ENCODE measurements at regions of chr19 and their contacts with region 1.

Region 1: DNA sequence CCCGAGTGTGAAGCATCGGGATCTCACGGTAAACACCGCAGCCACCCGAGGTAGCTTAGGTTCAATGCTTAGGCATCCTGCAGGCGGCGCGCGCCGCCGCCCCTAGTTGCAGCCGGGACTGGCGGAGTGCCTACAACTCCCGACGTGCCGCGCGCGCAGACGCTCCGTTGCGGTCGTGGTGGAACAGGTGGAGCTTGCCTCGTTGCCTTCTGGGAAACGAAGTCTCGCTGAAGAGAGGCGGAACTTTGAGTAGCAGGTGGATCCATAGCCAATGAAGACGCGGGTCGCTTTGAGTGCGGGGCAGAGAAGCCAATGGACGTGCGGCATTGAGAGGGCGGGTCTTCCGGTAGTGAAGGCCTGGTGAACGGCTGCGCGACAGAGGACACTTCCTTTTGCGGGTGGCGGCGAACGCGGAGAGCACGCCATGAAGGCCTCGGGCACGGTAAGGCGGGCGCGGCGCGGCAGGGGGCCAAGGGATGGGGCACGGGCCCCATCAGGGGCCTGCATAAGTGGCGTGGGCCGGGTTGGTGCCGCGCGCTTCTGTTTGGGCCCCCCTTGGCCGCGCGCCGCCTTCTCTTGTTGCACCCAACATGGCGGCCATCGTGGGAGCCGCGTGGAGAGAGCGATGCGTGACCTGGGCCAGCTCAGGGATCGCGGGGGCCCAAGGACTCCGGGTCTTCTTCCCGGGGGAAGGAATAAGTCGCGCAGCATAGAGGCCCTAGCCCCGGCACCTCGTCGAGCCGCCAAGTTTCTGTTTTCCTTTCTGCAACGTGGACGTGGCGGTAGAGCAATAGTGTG is at the start of gene RPL18A:
- DNase-seq: peak; percentile 98 to 99 (median 99)
- ATAC-seq: peak; percentile 96 to 98
- H3K4me3 ChIP-seq: peak within 1 kb of the TSS; percentile 85
- H3K27ac ChIP-seq: peak within 1 kb of the TSS; percentile 49
- H3K4me1 ChIP-seq: peaks cover 5% of the 10 kb centered on the region
- H3K27me3 ChIP-seq: no peaks in the 10 kb centered on the region
- total RNA-seq, gene RPL18A: 850 to 1,097 (median 916) TPM

Region 2: DNA sequence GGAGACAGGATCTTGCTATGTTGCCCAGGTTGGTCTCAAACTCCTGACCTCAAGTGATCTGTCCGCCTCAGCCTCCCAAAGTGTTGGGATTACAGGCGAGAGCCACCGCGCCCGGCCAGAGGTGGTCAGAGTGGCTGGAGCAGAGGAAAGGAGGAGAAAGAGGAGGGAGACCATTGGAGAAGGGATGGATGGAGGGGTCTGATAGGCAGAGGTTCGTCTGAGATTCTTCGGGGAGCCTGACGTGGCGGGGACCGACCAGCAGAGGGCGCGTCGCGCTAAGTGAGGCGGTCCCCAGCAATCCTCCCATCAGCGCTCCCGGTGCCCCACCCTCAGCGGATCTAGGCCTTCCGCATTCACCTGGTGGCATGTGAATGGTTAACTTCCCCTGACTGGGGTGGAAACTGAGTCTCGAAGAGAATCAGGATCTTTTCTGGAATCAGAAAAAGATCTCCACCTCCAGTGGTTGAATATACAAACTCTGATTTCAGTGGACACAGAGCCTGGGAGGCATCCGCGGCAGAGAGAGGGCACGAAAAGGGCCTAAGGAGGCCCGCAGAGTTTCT is 513.5 kb before region 1 on chr19:
- intact Hi-C with region 1: loop called in 1 of 4 experiments (anchors 5 kb)
- DNase-seq: peak; percentile 78 to 92 (median 92)
- ATAC-seq: peak; percentile 73 to 75
- H3K4me3 ChIP-seq: no peak overlapping the region
- H3K27ac ChIP-seq: no peak overlapping the region
- H3K4me1 ChIP-seq: no peaks in the 10 kb centered on the region
- H3K27me3 ChIP-seq: no peaks in the 10 kb centered on the region

Region 3: GRCh38 chr19:17703824-17704463 is 155.8 kb before region 1 on chr19:
- intact Hi-C with region 1: loop called in 2 of 4 experiments (anchors 10 kb)
- DNase-seq: peak; percentile 59 to 85 (median 80)
- ATAC-seq: peak; percentile 70 to 90
- H3K4me3 ChIP-seq: no peak overlapping the region
- H3K27ac ChIP-seq: no peak overlapping the region
- H3K4me1 ChIP-seq: no peaks in the 10 kb centered on the region
- H3K27me3 ChIP-seq: no peaks in the 10 kb centered on the region

Region 4: GRCh38 chr19:17784201-17785008 is 75.3 kb before region 1 on chr19:
- intact Hi-C with region 1: loop called in 1 of 4 experiments (anchors 5 kb)
- DNase-seq: peak; percentile 67 to 80 (median 72)
- ATAC-seq: peak in 1 of 2 donors; percentile 55
- H3K4me3 ChIP-seq: no peak overlapping the region
- H3K27ac ChIP-seq: no peak overlapping the region
- H3K4me1 ChIP-seq: no peaks in the 10 kb centered on the region
- H3K27me3 ChIP-seq: no peaks in the 10 kb centered on the region

Region 5: GRCh38 chr19:17996826-17997316 is 137.1 kb after region 1 on chr19:
- intact Hi-C with region 1: loop called in 3 of 4 experiments (anchors 5 to 10 kb)
- DNase-seq: peak; percentile 86 to 95 (median 94)
- ATAC-seq: peak; percentile 74 to 76
- H3K4me3 ChIP-seq: no peak overlapping the region
- H3K27ac ChIP-seq: no peak overlapping the region
- H3K4me1 ChIP-seq: no peaks in the 10 kb centered on the region
- H3K27me3 ChIP-seq: no peaks in the 10 kb centered on the region